ENCODE measurements at regions of chr12 and their contacts with region 1.

Region 1: GRCh38 chr12:6563448-6564050 is 4.5 kb downstream of the NOP2 start:
- H3K4me3 ChIP-seq: no peak overlapping the region
- H3K27ac ChIP-seq: no peak overlapping the region
- H3K4me1 ChIP-seq: no peaks in the 10 kb centered on the region
- CTCF ChIP-seq: peak; percentile 76; the same call in 1 of the 2 replicates

Region 2: DNA sequence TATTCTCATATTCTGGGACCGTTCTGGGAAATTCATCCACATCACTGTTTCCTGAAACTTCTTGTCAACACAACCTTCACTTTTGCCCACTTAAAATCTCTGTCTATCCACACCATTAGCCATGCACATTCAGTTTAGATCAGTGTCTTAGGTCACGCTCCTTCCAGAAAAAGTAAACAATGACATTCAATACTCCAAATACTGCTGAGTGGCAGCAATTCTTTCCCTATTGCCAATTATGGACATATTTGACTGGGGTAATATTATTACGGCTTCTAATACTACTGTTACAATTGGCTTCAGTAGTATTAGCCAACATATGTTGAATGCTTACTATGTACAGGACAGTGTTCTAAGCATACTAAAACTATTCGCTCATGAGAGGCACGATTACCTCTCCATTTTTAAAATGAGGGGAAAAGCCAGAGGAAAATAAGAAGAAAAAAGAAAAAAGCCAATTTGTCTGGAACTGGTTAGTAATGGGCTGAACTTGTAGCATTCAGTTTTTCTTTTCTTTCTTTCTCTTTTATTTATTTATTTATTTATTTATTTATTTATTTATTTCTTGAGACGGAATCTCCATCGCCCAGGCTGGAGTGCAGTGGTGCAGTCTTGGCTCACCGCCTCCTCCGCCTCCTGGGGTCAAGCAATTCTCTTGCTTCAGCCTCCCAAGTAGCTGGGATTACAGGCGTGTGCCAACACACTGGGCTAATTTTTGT is 156.2 kb before region 1 on chr12:
- CTCF ChIA-PET with region 1: no interaction called
- POLR2A ChIA-PET with region 1: no interaction called
- H3K4me3 ChIP-seq: no peak overlapping the region
- H3K27ac ChIP-seq: no peak overlapping the region
- H3K4me1 ChIP-seq: no peaks in the 10 kb centered on the region
- CTCF ChIP-seq: no peak

Region 3: GRCh38 chr12:6613776-6614512 is 50.4 kb after region 1 on chr12:
- CTCF ChIA-PET with region 1: no interaction called
- POLR2A ChIA-PET with region 1: interaction called, 11 read pairs
- H3K4me3 ChIP-seq: no peak overlapping the region
- H3K27ac ChIP-seq: peak overlapping the region; percentile 79
- H3K4me1 ChIP-seq: peaks cover 14% of the 10 kb centered on the region
- CTCF ChIP-seq: peak; percentile 87